ENCODE measurements at regions of chr17 and their contacts with region 1.

Region 1: DNA sequence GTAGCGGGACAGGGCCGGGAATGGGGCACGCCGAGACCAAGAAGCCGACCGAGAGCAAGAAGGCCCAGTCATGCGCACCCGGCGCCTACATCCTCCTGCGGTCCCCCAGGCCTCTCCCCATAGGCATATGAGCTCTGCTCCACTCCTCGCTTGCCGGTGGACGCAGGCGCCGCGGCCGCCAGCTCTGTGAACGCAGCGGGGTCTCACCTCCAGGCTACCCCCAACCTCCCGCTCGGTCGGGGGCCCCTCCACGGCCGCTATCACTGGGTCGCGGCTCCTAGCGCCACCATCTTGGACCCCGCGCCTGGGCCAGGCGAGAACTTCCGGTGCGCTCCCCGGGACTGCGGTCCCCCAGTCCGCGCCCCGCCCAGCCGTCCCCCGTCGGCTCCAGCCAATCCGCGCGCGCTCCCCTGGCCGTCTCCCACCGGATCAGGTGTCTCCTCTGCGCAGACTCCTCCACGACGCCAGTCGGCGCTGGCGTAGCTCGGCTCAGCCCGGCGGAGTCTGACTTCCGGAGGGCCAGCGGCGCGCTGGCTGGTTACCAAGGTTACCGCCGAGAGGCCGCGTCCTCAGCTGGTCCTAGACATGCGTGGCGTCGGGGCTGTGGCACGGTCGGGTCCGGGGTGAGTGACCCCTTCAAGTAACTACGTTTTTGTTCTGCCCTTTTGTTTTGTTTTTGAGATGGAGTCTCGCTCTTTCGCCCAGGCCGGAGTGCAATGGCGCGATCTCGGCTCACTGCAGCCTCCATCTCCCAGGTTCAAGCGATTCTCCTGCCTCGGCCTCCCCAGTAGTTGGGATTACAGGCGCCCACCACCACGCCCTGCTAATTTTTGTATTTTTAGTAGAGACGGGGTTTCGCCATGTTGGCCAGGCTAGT is at the start of gene ZNF594:
- DNase-seq: peak; percentile 98
- ATAC-seq: peak; percentile 100
- total RNA-seq, gene ZNF594: 7.2 TPM

Region 2: GRCh38 chr17:5111402-5112204 is 80.2 kb before region 1 on chr17 and contains the start of gene ZNF232:
- intact Hi-C with region 1: loop called (anchors 5 kb)
- DNase-seq: peak; percentile 97
- ATAC-seq: peak; percentile 96
- total RNA-seq, gene ZNF232: 4.9 TPM

Measured in Right ventricle myocardium inferior (tissue), 1 donor.